ENCODE measurements at regions of chr1 and their contacts with region 1.

Region 1: GRCh38 chr1:214637722-214638458 is 34.9 kb downstream of the CENPF start:
- DNase-seq: no peak
- ATAC-seq: no peak
- H3K4me3 ChIP-seq: no peak overlapping the region
- H3K27ac ChIP-seq: no peak overlapping the region
- H3K4me1 ChIP-seq: no peaks in the 10 kb centered on the region
- H3K27me3 ChIP-seq: no peaks in the 10 kb centered on the region
- CTCF ChIP-seq: peak; percentile 46 to 75 (median 60)
- POLR2A ChIP-seq: no peak

Region 2: DNA sequence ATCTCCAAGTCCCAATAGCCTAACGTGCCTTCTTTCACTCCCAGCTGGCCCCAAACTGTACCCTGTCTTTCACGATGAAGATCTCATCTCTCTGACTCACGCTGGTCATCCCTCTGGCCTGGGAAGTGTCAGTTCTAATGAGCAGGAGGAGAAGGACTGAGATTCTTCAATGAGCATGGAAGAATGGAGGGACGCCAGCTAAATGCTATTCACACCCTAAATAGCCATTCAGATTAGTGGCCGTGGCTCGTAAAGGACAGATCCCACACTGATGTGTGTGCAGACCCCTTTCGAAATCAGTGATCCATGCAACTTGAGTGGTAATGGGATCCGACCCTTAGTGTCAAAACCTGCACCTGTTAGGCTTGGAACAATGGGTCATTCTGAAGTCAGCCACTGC is 432.8 kb before region 1 on chr1:
- intact Hi-C with region 1: loop called in 3 of 10 experiments (anchors 5 to 10 kb)
- DNase-seq: no peak
- ATAC-seq: no peak
- H3K4me3 ChIP-seq: no peak overlapping the region
- H3K27ac ChIP-seq: no peak overlapping the region
- H3K4me1 ChIP-seq: no peaks in the 10 kb centered on the region
- H3K27me3 ChIP-seq: peaks cover 0 to 7% (median 0%) of the 10 kb centered on the region in 9 donors
- CTCF ChIP-seq: no peak
- POLR2A ChIP-seq: no peak